Tibial artery (tissue), 4 donors: ENCODE measurements at regions of chr2 and their contacts with region 1.

Region 1: DNA sequence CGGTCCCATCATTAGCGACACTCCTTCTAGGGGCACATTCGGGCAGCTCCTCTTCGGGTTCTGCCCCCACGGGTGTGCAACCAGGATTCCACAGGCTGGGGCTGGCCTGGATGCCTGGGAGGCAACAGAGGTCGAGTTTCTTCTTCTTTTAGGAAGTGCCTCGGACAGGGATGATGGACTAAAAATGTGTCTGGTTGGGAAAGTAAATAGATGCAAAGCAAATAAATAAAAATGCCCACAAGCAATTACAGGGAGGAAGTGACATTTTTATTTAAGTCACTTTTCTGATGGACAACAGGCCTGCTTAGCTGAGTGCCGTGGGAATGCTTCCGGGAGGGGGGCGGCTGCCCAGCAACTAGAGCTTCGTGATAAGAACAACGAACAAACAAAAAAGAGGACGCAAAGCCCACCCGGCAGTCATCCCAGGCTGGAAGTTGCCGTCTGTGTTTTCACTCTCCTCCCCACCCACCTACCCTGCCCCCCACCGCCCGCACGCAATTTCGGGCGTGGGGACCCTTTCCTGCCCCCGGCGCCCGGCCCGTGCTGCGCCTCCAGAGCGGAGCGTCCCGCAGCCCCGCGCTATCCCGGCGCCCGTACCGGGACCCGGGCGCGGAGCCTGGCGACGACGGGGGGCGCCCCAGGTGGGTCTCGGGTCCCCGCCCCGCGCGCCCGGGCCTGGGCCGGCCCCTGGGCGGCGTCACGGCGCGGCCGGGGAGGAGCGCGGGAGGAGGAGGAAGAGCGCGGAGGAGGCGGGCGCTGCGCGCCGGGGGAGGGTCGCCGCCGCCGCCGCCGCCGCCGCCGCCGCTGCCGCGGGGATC is 412 bp upstream of the NCK2 start:
- DNase-seq: peak in 1 of 2 donors; percentile 72
- H3K4me3 ChIP-seq: peak overlapping the region; percentile 66 to 88
- H3K27ac ChIP-seq: peak overlapping the region; percentile 88 to 96
- H3K4me1 ChIP-seq: peaks cover 0 to 36% (median 24%) of the 10 kb centered on the region in 4 donors
- H3K27me3 ChIP-seq: no peaks in the 10 kb centered on the region
- CTCF ChIP-seq: no peak

Region 2: GRCh38 chr2:105604938-105605337 is 139.4 kb before region 1 on chr2:
- intact Hi-C with region 1: loop called (anchors 10 kb)
- DNase-seq: peak; percentile 60 to 85
- H3K4me3 ChIP-seq: peak overlapping the region in 1 of 2 donors; percentile 17
- H3K27ac ChIP-seq: peak overlapping the region; percentile 69 to 76
- H3K4me1 ChIP-seq: peaks cover 0 to 32% (median 14%) of the 10 kb centered on the region in 4 donors
- H3K27me3 ChIP-seq: no peaks in the 10 kb centered on the region
- CTCF ChIP-seq: no peak

Region 3: DNA sequence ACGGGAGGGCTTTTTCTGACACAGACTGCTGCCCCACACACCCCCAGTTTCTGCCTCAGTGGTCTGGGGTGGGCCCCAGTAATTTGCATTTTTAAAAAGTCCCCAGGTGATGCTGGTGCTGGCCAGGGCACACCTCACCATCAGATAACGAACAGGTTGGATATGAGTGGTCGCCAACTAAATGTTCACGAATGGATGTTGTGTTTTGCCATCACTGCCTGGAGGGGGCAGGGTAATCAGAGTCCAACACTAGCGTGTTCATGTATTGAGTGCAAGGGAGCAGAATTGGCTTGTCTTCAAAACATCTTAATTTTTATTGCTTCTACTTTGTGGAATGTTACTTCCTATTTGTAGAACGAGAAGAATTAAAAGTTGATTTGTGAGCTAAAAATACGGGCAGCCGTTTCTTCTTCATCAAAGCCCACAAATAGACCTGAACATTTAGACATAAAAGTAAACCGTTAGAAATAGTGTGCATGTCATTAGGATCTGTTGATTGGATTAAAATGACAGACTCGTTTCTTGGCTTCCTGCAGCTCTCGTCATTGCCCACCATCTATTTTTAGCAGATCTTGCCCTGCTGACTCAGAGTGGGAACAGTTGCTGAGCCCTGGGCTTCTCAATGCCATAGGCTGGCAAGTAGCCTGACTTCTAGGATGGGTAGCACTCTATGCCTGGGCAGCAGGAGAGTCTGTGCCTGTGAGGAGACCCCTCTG is 45.6 kb after region 1 on chr2:
- intact Hi-C with region 1: loop called (anchors 5 kb)
- DNase-seq: peak; percentile 61 to 82
- H3K4me3 ChIP-seq: peak overlapping the region; percentile 5 to 37
- H3K27ac ChIP-seq: peak overlapping the region; percentile 73 to 74
- H3K4me1 ChIP-seq: peaks cover 0 to 72% (median 36%) of the 10 kb centered on the region in 4 donors
- H3K27me3 ChIP-seq: no peaks in the 10 kb centered on the region
- CTCF ChIP-seq: no peak

Region 4: DNA sequence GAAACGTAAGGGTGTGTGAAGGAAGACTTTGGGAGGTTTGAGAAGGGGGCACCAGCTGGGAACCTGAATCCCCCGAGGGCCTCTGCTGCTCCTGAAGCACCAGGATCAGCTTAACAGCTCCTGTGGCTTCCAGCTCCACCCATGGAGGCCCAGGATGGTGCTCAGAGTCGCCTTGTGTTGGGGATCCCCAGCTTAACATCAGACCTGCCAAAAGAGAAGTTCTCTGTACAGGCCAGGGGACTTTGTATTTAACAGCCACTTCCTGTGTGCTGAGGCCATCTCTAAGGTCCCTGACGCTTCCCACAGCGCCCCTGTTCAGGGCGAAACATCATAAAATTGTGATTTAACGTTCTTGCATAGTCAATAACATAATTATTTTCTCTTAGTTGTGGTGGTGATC is 77.9 kb after region 1 on chr2:
- intact Hi-C with region 1: no loop called
- DNase-seq: no peak
- H3K4me3 ChIP-seq: no peak overlapping the region
- H3K27ac ChIP-seq: no peak overlapping the region
- H3K4me1 ChIP-seq: peaks cover 0 to 24% (median 14%) of the 10 kb centered on the region in 4 donors
- H3K27me3 ChIP-seq: no peaks in the 10 kb centered on the region
- CTCF ChIP-seq: no peak